Psoas muscle (tissue), 8 donors: ENCODE measurements at regions of chr15 and their contacts with region 1.

Region 1: DNA sequence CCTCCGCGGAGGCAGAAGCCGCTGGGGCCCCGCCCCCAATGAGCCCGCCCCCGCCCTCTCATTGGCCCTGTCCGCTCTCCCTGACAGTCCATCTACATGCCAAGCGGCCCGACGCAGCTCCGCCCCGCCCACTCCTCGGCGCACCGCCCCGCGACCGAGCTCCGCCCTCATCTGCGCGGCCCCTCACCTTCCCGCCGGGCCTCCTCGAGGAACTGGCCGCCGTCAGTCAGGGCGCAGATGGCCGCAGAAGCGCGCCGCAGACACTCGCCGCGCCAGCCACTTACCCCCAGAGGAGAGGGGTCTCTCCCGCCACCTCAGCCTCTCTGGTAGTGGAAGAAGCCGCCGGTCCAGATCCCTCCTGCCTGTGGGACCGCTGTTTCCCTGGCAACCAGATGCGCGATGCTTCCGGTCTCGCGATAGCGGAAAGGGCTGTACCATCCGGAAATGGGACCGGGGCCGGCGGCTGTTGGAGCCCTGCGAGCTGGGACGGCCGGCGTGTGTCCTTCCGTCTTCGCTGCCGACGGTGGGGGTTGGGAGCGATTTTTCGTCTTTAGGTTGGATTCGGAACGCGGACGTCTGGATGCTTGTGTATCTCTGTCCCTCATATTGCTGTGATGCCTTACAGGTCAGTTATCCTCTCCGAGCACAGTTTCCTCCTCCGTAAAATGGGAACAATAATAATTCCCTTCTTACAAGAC is at the start of gene FSIP1:
- DNase-seq: peak; percentile 96 to 97
- ATAC-seq: peak; percentile 96 to 98 (median 98)
- H3K4me3 ChIP-seq: peak within 1 kb of the TSS; percentile 78
- H3K27ac ChIP-seq: no peak within 1 kb of the TSS
- H3K4me1 ChIP-seq: no peaks in the 10 kb centered on the region
- H3K27me3 ChIP-seq: peaks cover 0 to 38% (median 0%) of the 10 kb centered on the region in 3 donors
- CTCF ChIP-seq: no peak
- total RNA-seq, gene FSIP1: 0.68 to 2.4 (median 1.2) TPM in 3 of 4 donors, not detected in the other

Region 2: DNA sequence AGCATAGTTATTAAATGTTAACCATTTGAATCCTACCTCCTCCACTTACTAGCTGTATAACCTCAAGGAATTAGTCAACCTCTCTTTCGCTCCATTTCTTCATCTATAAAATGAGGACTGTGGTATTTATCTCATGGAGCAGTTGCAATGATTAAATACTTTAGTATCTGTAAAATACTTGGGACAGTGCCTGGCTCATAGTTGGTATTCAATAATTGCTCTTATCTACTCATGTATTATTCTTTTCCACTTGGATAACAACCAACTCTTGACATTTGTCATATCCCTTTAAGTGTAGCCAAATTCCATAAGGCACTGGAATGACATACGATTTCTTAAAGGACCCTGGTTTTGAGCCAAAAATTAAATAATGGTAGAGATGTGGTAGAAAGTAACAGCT is 71.9 kb before region 1 on chr15:
- intact Hi-C with region 1: no loop called
- DNase-seq: no peak
- ATAC-seq: no peak
- H3K4me3 ChIP-seq: no peak overlapping the region
- H3K27ac ChIP-seq: no peak overlapping the region
- H3K4me1 ChIP-seq: no peaks in the 10 kb centered on the region
- H3K27me3 ChIP-seq: no peaks in the 10 kb centered on the region
- CTCF ChIP-seq: no peak

Region 3: DNA sequence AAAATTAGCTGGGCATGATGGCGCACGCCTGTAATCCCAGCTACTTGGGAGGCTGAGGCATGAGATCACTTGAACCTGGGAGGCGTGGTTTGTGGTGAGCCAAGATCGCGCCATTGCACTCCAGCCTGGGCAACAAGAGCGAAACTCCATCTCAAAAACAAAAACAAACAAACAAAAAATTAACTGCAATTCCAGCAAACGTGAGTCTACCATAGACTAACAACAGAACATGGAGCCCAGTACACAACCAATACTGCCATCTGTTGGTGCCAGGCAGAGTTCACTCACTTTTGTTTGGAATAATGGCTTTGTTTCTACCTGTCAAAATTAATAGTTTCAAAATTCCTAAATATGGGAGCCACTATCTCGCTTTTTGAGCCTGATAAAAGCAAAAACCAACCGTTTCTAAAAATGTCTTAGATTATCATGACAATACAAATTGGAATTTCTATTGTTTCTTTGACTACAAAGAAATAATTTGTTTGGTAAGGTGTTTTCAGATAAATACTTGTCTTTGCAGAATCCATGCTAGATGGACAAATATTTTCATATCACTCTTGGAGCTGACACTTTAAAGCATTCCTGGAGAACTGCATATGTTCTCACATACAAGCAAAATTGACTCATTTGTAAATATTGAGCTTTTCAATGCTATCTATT is 92.4 kb after region 1 on chr15:
- intact Hi-C with region 1: loop called in 1 of 2 experiments (anchors 5 kb)
- DNase-seq: no peak
- ATAC-seq: no peak
- H3K4me3 ChIP-seq: no peak overlapping the region
- H3K27ac ChIP-seq: no peak overlapping the region
- H3K4me1 ChIP-seq: no peaks in the 10 kb centered on the region
- H3K27me3 ChIP-seq: no peaks in the 10 kb centered on the region
- CTCF ChIP-seq: peak; percentile 31

Region 4: DNA sequence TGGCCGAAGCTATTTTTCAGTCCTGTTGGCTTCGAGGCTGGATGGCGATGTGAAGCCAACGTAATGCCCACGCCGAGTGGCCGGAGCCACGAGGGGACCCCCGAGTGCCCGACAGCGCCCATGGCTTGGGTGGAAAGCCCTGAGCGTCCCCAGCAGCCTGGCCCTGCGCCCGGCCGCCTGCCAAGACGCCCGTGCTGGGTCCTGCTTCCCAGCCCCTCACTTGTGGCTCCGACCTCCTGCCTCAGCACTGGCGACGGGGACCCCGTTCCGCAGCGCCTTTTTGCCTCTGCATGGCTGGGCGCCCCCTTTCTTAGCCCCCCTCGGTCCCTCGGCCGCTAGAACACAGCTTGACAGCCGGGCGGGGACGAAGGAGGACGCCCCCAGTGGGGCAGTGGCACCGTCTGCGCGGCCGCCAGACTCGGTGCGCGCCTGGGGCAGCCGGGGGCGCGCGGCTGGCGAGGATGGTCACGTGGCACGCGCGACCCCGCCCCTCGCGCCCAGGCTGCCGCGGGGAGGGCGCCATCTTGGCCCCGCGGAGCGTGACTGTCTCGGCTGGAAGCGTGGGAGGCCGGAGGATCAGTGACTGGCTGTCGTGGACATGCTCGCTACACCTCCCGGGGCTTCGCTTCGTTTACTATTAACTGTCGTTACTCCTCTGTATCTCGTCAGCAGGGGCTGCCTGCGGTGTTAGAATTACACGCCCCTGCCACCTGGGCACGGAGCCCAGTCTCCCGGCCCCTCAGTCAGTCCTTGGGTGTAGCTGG is 138.1 kb after region 1 on chr15:
- intact Hi-C with region 1: loop called in 1 of 2 experiments (anchors 10 kb)
- DNase-seq: peak; percentile 83 to 87
- ATAC-seq: peak; percentile 95 to 97 (median 96)
- H3K4me3 ChIP-seq: peak overlapping the region; percentile 76
- H3K27ac ChIP-seq: peak overlapping the region; percentile 69
- H3K4me1 ChIP-seq: no peaks in the 10 kb centered on the region
- H3K27me3 ChIP-seq: peaks cover 0 to 38% (median 11%) of the 10 kb centered on the region in 3 donors
- CTCF ChIP-seq: no peak

Region 5: GRCh38 chr15:39934397-39935071 is 151.9 kb after region 1 on chr15:
- intact Hi-C with region 1: loop called (anchors 5 to 10 kb)
- DNase-seq: no peak
- ATAC-seq: peak in 2 of 4 donors; percentile 1 to 11
- H3K4me3 ChIP-seq: peak overlapping the region; percentile 85
- H3K27ac ChIP-seq: peak overlapping the region; percentile 88
- H3K4me1 ChIP-seq: peaks cover 26% of the 10 kb centered on the region
- H3K27me3 ChIP-seq: no peaks in the 10 kb centered on the region
- CTCF ChIP-seq: no peak

Region 6: GRCh38 chr15:39976291-39977274 is 194.0 kb after region 1 on chr15:
- intact Hi-C with region 1: loop called in 1 of 2 experiments (anchors 10 kb)
- DNase-seq: peak; percentile 67 to 76
- ATAC-seq: peak; percentile 57 to 86 (median 73)
- H3K4me3 ChIP-seq: peak overlapping the region; percentile 65
- H3K27ac ChIP-seq: peak overlapping the region; percentile 71
- H3K4me1 ChIP-seq: no peaks in the 10 kb centered on the region
- H3K27me3 ChIP-seq: no peaks in the 10 kb centered on the region
- CTCF ChIP-seq: peak; percentile 32

Region 7: GRCh38 chr15:40038638-40039543 is 256.3 kb after region 1 on chr15 and contains the start of gene SRP14:
- intact Hi-C with region 1: loop called in 1 of 2 experiments (anchors 10 kb)
- DNase-seq: peak; percentile 97 to 98
- ATAC-seq: peak; percentile 96 to 97 (median 96)
- H3K4me3 ChIP-seq: peak within 1 kb of the TSS; percentile 80
- H3K27ac ChIP-seq: peak within 1 kb of the TSS; percentile 94
- H3K4me1 ChIP-seq: peaks cover 14% of the 10 kb centered on the region
- H3K27me3 ChIP-seq: no peaks in the 10 kb centered on the region
- CTCF ChIP-seq: no peak
- total RNA-seq, gene SRP14: 134 to 170 (median 153) TPM

Region 8: DNA sequence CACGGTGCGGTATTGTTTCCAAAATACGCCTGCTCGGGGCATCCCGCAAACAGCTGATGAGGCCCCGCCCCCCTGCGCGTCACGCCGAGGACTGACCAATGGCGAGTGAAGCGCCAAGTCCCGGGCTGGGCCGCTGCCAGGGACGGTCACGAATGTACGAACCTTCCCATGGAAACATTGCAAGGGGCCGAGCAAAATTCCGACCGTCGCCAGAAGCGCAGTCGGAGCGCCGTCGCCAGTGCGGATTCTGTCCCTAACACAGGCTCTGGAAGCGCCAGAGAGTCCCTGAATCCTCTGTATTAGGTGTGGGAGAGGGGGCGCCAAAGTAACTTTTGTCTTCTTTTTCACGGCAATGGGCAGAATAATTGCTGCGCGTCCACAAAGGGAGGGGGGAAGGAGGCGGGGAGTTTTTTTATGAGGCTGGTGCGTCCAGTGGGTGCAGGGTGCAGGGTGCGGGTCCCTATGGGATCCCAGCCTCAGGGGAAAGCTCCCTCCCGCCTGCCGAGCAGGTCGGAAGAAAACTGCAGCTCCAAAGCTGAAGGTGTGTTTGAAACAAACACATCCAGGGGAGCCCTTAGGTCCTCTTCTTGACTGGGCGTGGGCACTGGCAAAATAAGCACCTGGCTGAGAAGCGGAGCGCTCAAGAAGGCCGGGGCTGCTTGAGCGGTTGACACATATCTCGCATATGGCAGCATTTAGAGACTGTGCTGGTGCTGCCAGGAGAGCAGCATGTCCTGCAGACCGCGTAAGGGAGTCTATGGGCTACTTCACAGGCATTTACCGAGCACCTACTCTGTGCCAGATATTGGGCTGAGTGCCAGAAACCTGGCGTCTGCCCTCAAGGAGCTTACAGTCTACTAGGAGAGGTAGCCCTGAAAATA is 326.5 kb after region 1 on chr15 and contains the start of gene BMF:
- intact Hi-C with region 1: loop called in 1 of 2 experiments (anchors 10 kb)
- DNase-seq: peak; percentile 100
- ATAC-seq: peak; percentile 84 to 88 (median 85)
- H3K4me3 ChIP-seq: peak within 1 kb of the TSS; percentile 80
- H3K27ac ChIP-seq: peak within 1 kb of the TSS; percentile 91
- H3K4me1 ChIP-seq: peaks cover 33% of the 10 kb centered on the region
- H3K27me3 ChIP-seq: no peaks in the 10 kb centered on the region
- CTCF ChIP-seq: no peak
- total RNA-seq, gene BMF: 1.5 to 5.9 (median 3.7) TPM